ENCODE measurements at regions of chr11 and their contacts with region 1.

Region 1: DNA sequence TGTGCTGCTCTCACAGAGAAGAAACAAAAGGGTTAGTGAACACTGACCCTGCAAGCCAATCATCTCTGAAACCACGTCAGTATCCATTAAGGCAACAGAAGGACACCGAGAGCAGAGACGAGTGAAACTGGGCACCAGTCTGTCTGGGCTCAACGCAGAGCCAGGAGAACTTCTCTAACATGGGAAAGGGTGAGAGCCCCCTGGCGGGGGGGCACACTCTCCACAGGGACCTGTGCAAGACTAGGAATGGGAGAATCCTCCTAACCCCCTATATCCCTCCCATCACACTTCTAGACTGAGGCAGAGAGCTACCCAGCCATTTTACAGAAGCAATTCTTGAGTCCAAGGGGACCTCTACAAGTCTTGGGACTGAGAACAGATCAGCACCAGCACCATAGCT is 285.8 kb downstream of the SOX6 start:
- DNase-seq: no peak
- H3K4me3 ChIP-seq: no peak overlapping the region
- H3K27ac ChIP-seq: no peak overlapping the region
- H3K4me1 ChIP-seq: no peaks in the 10 kb centered on the region
- H3K27me3 ChIP-seq: no peaks in the 10 kb centered on the region
- CTCF ChIP-seq: no peak
- EP300 ChIP-seq: no peak
- POLR2A ChIP-seq: no peak

Region 2: GRCh38 chr11:15707971-15708370 is 362.6 kb before region 1 on chr11:
- in situ Hi-C with region 1: no loop called
- intact Hi-C with region 1: no loop called
- DNase-seq: peak; percentile 17
- H3K4me3 ChIP-seq: no peak overlapping the region
- H3K27ac ChIP-seq: no peak overlapping the region
- H3K4me1 ChIP-seq: peaks cover 0 to 3% (median 0%) of the 10 kb centered on the region in 4 donors
- H3K27me3 ChIP-seq: no peaks in the 10 kb centered on the region
- CTCF ChIP-seq: no peak
- EP300 ChIP-seq: no peak
- POLR2A ChIP-seq: no peak

Region 3: DNA sequence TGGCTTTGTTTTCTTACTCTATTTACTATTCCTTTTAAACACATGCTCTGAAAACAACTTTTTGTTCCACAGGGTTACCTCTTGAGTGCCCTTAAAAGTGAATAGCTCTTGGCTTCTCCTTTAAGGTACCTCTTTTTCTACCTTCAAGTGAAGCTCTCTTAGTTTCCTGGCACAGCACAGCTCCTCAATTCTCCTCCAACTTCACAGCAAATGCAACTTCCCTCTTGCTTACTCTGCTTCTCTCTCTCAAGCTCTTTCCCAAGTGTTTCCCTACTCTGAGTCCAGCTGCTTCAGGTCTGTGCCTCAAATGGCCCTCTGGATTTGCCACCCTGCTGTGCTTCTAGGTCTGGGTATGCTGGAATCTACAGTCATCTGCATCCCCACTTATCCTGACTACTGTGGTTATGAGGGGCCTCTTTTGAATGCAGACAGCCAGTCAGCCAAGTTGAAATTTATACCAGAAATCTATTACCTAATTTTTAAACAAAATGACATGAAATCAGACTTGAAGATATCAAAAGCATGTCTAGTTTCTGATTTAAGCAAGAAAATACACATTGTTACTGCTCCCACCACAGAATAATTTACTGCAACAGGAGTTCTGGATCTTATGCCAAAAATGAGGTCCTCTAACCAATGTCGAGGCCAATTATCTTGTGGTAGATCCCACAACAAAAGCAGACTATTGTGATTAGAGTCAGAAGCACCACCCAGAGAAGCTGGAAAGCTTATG is 85.3 kb before region 1 on chr11:
- in situ Hi-C with region 1: no loop called
- intact Hi-C with region 1: no loop called
- DNase-seq: no peak
- H3K4me3 ChIP-seq: no peak overlapping the region
- H3K27ac ChIP-seq: no peak overlapping the region
- H3K4me1 ChIP-seq: no peaks in the 10 kb centered on the region
- H3K27me3 ChIP-seq: no peaks in the 10 kb centered on the region
- CTCF ChIP-seq: no peak
- EP300 ChIP-seq: no peak
- POLR2A ChIP-seq: no peak

Region 4: DNA sequence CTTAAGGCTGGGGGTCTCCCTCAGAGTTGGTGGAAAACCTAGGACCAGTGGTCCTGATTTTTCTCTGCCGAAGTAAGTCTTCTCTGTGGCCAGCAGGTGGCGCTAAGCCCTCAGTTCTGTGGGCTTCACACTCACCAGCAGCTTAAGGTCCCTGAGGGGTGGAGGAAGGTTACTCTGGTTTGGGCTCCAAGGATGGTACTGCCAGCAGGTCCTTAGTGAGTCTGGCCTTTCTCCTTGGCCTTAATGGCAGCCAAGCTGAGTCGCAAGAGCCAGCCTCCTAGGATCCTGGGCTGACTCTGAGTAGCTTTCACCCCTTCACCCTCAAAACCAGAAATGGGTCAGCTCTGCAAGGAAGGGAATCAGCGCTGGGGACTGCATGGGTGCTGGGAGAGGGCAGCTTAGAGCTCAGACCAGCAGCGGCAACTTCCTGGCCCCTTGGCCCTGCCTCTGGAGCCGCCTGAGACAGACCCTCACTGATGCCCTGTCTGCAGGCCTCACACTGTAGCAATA is 1313.5 kb after region 1 on chr11:
- in situ Hi-C with region 1: no loop called
- intact Hi-C with region 1: loop called (anchors 5 kb)
- DNase-seq: peak; percentile 83
- H3K4me3 ChIP-seq: no peak overlapping the region
- H3K27ac ChIP-seq: no peak overlapping the region
- H3K4me1 ChIP-seq: peaks cover 0 to 5% (median 2%) of the 10 kb centered on the region in 4 donors
- H3K27me3 ChIP-seq: no peaks in the 10 kb centered on the region
- CTCF ChIP-seq: peak; percentile 87 to 94 (median 90)
- EP300 ChIP-seq: no peak
- POLR2A ChIP-seq: no peak

Measured in transverse colon (tissue), 4 donors.